Esophagus squamous epithelium (tissue), 5 donors: ENCODE measurements at regions of chr22 and their contacts with region 1.

Region 1: DNA sequence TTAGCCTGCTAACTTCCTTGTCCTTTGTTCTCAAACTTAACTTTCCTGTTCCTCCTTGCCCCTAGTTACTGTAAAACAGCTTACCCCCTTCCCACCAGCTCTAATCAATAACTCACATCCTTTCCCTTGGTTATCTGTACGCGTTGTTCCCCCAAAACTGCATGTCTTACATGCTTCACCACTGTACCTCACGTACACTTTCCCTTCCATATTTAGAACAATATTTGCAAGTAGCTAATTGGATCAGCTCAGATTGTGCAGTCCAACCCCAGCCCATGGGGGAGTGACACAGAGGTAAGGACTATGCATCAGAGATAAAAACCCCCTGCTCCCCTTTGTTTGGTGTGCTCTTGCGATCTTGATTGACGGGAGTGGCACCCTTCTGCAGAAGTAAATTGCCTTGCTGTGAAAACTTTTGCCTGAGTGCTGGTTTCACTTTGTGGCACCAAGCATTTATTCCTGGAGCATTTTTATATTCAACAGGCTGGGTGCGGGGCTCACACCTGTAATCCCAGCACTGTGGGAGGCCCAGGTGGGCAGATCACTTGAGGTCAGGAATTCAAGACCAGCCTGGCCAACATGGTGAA is 30.9 kb downstream of the MIF start:
- DNase-seq: no peak
- H3K4me3 ChIP-seq: no peak overlapping the region
- H3K27ac ChIP-seq: peak overlapping the region in 1 of 4 donors; percentile 48
- H3K4me1 ChIP-seq: peaks cover 0 to 23% (median 0%) of the 10 kb centered on the region in 3 donors
- H3K27me3 ChIP-seq: no peaks in the 10 kb centered on the region
- CTCF ChIP-seq: no peak
- POLR2A ChIP-seq: no peak

Region 2: DNA sequence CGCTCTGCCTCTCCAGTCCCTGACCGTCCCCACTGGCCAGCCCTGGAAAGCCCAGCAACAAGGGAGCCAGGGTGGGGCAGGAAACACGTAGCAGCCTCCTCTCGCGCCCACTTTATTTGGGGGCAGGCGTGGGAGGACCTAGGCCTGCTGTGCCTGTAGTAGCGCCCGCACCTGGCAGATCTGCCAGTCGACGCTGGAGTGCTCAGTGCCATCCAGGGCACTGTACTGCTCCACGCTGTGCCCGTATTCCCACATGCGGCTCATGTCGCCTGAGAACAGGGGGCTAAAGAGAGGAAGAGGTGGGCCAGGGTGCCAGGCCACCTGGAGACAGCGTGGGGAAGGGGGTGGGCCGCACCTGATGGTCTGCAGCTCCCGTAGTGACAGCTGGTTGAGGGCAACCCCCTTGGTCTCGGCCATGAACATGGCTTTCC is 276.0 kb before region 1 on chr22:
- intact Hi-C with region 1: no loop called
- DNase-seq: no peak
- H3K4me3 ChIP-seq: no peak overlapping the region
- H3K27ac ChIP-seq: no peak overlapping the region
- H3K4me1 ChIP-seq: no peaks in the 10 kb centered on the region
- H3K27me3 ChIP-seq: no peaks in the 10 kb centered on the region
- CTCF ChIP-seq: no peak
- POLR2A ChIP-seq: no peak

Region 3: GRCh38 chr22:23970816-23971486 is 45.8 kb after region 1 on chr22:
- intact Hi-C with region 1: loop called (anchors 5 kb)
- DNase-seq: no peak
- H3K4me3 ChIP-seq: no peak overlapping the region
- H3K27ac ChIP-seq: no peak overlapping the region
- H3K4me1 ChIP-seq: peaks cover 0 to 26% (median 0%) of the 10 kb centered on the region in 3 donors
- H3K27me3 ChIP-seq: no peaks in the 10 kb centered on the region
- CTCF ChIP-seq: no peak
- POLR2A ChIP-seq: no peak